G401 (cell line): ENCODE measurements at regions of chr19 and their contacts with region 1.

Region 1: GRCh38 chr19:17950310-17951156 is 16.4 kb upstream of the KCNN1 start:
- DNase-seq: no peak

Region 2: GRCh38 chr19:17993076-17993813 is 42.7 kb after region 1 on chr19:
- in situ Hi-C with region 1: loop called (anchors 5 kb)
- DNase-seq: no peak